ENCODE measurements at regions of chr13 and their contacts with region 1.

Region 1: DNA sequence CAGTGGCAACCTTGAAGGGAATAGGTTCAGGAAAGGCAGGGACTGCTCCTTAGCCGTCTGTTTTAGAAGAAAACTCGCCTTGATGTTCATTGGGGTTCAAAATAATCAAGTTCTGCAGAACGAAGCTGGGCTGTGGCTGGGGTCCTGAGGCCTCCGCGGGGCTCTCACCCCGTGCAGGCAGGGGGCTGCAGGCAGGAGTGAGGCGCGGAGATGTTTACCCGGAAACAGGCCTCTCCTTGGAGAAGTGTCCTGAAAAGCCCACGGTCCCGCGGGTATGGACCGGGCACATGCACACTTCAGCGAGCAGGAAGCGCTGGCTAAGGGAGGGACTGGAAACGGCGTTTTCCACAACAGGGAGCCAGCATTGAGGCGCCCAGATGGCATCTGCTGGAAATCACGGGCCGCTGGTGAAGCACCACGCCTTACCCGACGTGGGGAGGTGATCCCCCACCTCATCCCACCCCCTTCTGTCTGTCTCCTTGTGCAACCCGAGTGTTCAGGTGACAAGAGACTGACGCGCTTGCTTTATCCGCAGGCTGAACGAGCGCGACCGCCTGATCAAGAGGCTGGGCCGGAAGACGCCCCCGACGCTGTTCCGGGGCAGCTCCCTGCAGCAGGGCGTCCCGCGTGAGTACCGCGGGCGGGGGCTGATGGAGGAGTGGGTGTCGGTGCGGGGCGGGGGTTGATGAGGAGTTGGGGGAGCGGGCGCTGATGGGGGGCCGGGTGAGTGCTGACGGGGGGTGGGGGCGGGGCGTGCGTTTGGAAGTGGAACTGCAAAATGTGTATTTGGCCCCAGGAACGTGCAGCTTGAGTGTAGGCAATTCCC is 39.6 kb downstream of the SHISA2 start:
- DNase-seq: peak; percentile 43 to 91 (median 77)
- ATAC-seq: peak; percentile 96
- H3K4me3 ChIP-seq: peak overlapping the region; percentile 62 to 64
- H3K4me3 Mint-ChIP-seq: peak overlapping the region; percentile 84
- H3K27ac ChIP-seq: peak overlapping the region; percentile 83 to 86
- H3K27ac Mint-ChIP-seq: peak overlapping the region; percentile 97
- H3K4me1 ChIP-seq: peaks cover 21% of the 10 kb centered on the region
- H3K4me1 Mint-ChIP-seq: peaks cover 51% of the 10 kb centered on the region
- H3K27me3 ChIP-seq: no peaks in the 10 kb centered on the region
- H3K27me3 Mint-ChIP-seq: no peaks in the 10 kb centered on the region
- CTCF ChIP-seq: no peak

Region 2: GRCh38 chr13:25860845-25861244 is 151.4 kb before region 1 on chr13:
- CTCF ChIA-PET with region 1: no interaction called
- POLR2A ChIA-PET with region 1: no interaction called
- intact Hi-C with region 1: no loop called
- DNase-seq: no peak
- ATAC-seq: no peak
- H3K4me3 ChIP-seq: no peak overlapping the region
- H3K4me3 Mint-ChIP-seq: no peak overlapping the region
- H3K27ac ChIP-seq: no peak overlapping the region
- H3K27ac Mint-ChIP-seq: no peak overlapping the region
- H3K4me1 ChIP-seq: no peaks in the 10 kb centered on the region
- H3K4me1 Mint-ChIP-seq: no peaks in the 10 kb centered on the region
- H3K27me3 ChIP-seq: no peaks in the 10 kb centered on the region
- H3K27me3 Mint-ChIP-seq: no peaks in the 10 kb centered on the region
- CTCF ChIP-seq: no peak

Region 3: GRCh38 chr13:25874907-25875306 is 137.3 kb before region 1 on chr13:
- CTCF ChIA-PET with region 1: no interaction called
- POLR2A ChIA-PET with region 1: no interaction called
- intact Hi-C with region 1: loop called in 1 of 2 experiments (anchors 5 kb)
- DNase-seq: peak; percentile 35 to 82 (median 66)
- ATAC-seq: peak; percentile 91
- H3K4me3 ChIP-seq: peak overlapping the region in 1 of 2 experiments; percentile 3
- H3K4me3 Mint-ChIP-seq: peak overlapping the region; percentile 30
- H3K27ac ChIP-seq: peak overlapping the region; percentile 15 to 60
- H3K27ac Mint-ChIP-seq: peak overlapping the region; percentile 83
- H3K4me1 ChIP-seq: peaks cover 53% of the 10 kb centered on the region
- H3K4me1 Mint-ChIP-seq: peaks cover 81% of the 10 kb centered on the region
- H3K27me3 ChIP-seq: no peaks in the 10 kb centered on the region
- H3K27me3 Mint-ChIP-seq: no peaks in the 10 kb centered on the region
- CTCF ChIP-seq: no peak

Region 4: GRCh38 chr13:26051657-26052311 is 39.6 kb after region 1 on chr13 and contains the start of gene SHISA2:
- CTCF ChIA-PET with region 1: no interaction called
- POLR2A ChIA-PET with region 1: no interaction called
- intact Hi-C with region 1: loop called in 1 of 2 experiments (anchors 5 kb)
- DNase-seq: peak in 4 of 9 experiments; percentile 61 to 74 (median 70)
- ATAC-seq: peak; percentile 69
- H3K4me3 ChIP-seq: peak within 1 kb of the TSS; percentile 42
- H3K4me3 Mint-ChIP-seq: peak within 1 kb of the TSS; percentile 81
- H3K27ac ChIP-seq: no peak within 1 kb of the TSS
- H3K27ac Mint-ChIP-seq: peak within 1 kb of the TSS; percentile 45
- H3K4me1 ChIP-seq: peaks cover 28% of the 10 kb centered on the region
- H3K4me1 Mint-ChIP-seq: peaks cover 15% of the 10 kb centered on the region
- H3K27me3 ChIP-seq: peaks cover 7 to 9% of the 10 kb centered on the region in 2 experiments
- H3K27me3 Mint-ChIP-seq: peaks cover 20% of the 10 kb centered on the region
- CTCF ChIP-seq: no peak
- total RNA-seq, gene SHISA2: 6.4 to 6.8 TPM

Region 5: DNA sequence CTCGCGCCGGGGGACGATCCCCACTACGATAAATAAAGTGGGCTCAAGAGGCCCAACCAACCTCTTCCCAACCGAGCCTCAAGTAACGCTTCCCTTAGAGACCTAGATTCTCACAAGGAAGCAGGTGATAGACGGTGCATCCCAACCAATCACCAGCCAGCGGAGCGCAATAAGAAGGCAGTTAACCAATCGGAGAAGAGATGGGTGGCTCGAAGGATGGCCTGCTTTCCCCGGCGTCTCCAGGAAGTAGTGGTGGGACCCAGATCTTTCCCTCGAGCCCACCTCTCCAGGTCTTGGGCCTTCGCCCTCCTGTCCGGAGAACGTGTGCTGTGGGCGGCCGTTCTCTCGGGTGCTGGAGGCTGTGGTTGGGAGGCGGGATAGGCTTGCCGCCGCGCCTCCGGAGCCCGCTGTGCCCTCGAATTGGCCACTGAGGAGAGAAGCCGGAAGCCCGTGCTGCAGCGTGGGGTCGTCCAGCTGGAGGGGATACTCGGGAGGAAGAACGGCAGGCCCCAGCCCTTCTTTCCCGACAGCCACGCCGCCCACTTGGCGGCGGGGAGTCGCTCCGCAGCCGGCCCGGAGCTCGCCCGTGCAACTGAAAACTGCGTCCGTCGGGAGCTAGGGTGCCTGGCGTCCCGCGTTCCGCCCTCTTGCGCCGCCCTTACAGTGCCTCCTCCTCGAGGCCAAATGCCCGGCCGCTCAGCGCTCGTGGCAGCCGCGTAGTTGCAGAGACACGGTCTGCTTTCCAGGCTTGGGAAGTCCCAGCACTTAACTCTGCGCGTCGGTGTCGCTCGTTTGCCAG is 209.7 kb after region 1 on chr13 and contains the start of gene RNF6:
- CTCF ChIA-PET with region 1: no interaction called
- POLR2A ChIA-PET with region 1: no interaction called
- intact Hi-C with region 1: loop called in 1 of 2 experiments (anchors 2 kb)
- DNase-seq: peak; percentile 73 to 97 (median 86)
- ATAC-seq: peak; percentile 92
- H3K4me3 ChIP-seq: peak within 1 kb of the TSS; percentile 97 to 99
- H3K4me3 Mint-ChIP-seq: peak within 1 kb of the TSS; percentile 99
- H3K27ac ChIP-seq: peak within 1 kb of the TSS; percentile 90 to 98
- H3K27ac Mint-ChIP-seq: peak within 1 kb of the TSS; percentile 100
- H3K4me1 ChIP-seq: peaks cover 26% of the 10 kb centered on the region
- H3K4me1 Mint-ChIP-seq: peaks cover 45% of the 10 kb centered on the region
- H3K27me3 ChIP-seq: no peaks in the 10 kb centered on the region
- H3K27me3 Mint-ChIP-seq: no peaks in the 10 kb centered on the region
- CTCF ChIP-seq: no peak
- total RNA-seq, gene RNF6: 50.3 to 55.0 TPM